ENCODE measurements at regions of chr14 and their contacts with region 1.

Region 1: GRCh38 chr14:99752486-99753121 is 40.6 kb upstream of the EML1 start:
- DNase-seq: peak; percentile 51
- H3K4me3 ChIP-seq: no peak overlapping the region
- H3K27me3 ChIP-seq: no peaks in the 10 kb centered on the region
- CTCF ChIP-seq: no peak

Region 2: DNA sequence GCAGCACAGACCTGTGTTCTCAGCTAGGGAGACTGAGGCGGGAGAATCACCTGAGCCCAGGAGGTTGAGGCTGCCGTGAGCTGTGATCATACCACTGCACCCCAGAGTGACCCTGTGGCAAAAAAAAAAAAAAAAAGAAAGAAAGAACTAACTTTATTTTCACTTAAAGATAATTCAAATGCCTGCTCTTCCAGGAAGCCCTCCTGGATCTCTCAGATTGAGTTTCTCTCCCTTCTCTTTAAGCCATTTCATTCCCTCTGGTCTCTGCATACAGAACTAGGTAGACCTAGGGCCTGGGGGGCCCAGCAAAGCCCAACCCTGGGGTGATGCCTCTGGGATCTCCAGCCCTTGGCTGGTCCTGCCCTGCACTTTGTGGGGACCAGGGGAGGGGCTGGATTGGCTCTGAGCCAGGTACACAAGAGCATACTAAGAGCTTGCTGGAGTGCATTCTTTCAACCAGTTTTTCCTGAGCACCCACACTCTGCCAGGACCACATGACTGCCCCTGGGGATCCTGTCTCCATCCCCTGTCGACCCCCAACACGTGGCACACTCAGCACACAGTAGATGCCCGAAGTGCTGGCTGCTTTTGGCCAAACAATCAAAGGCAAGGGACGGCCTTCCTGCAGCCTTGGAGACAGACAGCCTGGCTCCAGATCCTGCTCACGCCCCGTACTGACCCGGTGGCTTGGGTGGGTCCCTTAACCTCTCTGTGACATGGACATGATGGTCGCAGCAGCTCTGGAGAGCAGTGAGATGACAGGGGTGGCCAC is 15.8 kb before region 1 on chr14:
- CTCF ChIA-PET with region 1: interaction called, 6 read pairs
- POLR2A ChIA-PET with region 1: interaction called, 15 read pairs
- DNase-seq: no peak
- H3K4me3 ChIP-seq: no peak overlapping the region
- H3K27me3 ChIP-seq: no peaks in the 10 kb centered on the region
- CTCF ChIP-seq: no peak